HCT116 (cell line): ENCODE measurements at regions of chr14 and their contacts with region 1.

Region 1: GRCh38 chr14:21498553-21499526 is 12.3 kb downstream of the METTL3 start:
- DNase-seq: peak; percentile 28
- ATAC-seq: peak; percentile 80
- H3K4me3 ChIP-seq: no peak overlapping the region
- H3K27ac ChIP-seq: no peak overlapping the region
- H3K4me1 ChIP-seq: no peaks in the 10 kb centered on the region
- H3K27me3 ChIP-seq: no peaks in the 10 kb centered on the region
- CTCF ChIP-seq: peak; percentile 27 to 67 (median 54); a peak in 5 of 6 replicates
- POLR2A ChIP-seq: no peak
- RAD21 ChIP-seq: peak; percentile 39; the same call in 1 of the 2 replicates

Region 2: DNA sequence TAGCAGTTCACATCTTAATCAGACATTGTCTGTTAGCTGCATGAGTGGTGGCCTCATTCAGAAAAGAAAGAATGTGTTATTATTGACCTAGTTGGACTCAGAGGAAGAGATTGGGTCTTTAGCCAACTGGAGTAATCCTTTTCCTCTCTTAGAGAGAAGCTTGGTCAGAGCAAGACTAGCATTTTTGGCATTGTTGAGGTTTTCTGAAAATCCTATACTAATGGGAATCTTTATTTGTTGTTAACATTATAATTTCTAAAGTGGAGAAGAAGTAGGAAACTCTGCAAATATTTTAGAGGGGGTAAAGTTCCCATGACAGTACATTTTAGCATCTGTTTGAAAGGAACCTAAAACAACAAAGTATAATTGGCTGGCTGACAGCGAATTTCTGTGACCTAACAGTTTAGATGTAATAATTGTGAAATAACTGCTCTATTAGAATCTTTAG is 12.2 kb before region 1 on chr14:
- CTCF ChIA-PET with region 1: interaction called, 12 read pairs
- POLR2A ChIA-PET with region 1: interaction called, 3 read pairs
- RAD21 ChIA-PET with region 1: no interaction called
- intact Hi-C with region 1: no loop called
- DNase-seq: no peak
- ATAC-seq: no peak
- H3K4me3 ChIP-seq: no peak overlapping the region
- H3K27ac ChIP-seq: no peak overlapping the region
- H3K4me1 ChIP-seq: no peaks in the 10 kb centered on the region
- H3K27me3 ChIP-seq: no peaks in the 10 kb centered on the region
- CTCF ChIP-seq: no peak
- POLR2A ChIP-seq: no peak
- RAD21 ChIP-seq: no peak

Region 3: DNA sequence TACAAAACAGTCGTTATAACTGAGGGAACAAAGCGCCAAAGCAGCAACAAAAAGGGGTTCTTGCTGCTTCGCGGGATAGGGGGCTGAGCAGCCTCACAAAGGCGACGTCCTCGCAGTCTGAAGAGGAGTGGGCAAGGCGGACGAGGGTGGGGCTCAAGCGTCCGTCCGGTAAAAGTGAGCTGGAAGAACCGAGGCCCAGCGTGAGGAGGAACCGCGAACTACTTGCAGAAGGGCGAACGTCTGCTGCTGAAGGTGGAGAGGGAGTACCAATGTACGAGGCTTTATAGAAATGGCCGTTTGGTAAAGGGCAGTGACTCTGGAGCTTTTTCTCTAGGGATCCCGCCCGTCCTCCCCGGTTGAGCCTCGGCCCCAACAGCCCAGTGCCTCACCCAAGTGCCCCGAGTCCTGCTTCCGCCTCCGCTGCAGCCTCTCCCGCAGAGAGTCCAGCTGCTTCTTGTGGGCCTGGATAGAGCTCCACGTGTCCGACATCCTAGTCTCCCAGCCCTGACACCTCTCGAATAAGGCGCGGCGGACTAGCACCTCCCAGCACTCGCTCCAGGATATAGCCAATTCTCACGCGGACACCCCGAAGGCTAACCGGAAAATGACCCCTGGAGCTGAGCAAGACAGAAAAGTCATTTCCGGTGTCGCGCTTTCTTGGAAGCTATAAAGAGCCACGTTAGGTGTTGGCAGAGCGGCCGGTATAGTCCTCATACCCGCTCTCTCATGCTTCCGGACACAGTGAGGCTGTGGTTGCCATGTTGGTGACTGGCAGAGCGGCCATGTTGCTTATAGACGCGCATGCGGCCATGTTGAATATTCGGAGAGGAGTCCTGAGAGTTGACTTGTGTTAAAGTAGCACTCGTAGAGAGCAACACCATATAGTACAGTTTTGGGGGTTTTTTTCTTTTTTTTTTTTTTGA is 12.2 kb after region 1 on chr14 and contains the start of gene METTL3:
- CTCF ChIA-PET with region 1: interaction called, 30 read pairs
- POLR2A ChIA-PET with region 1: interaction called, 6 read pairs
- RAD21 ChIA-PET with region 1: no interaction called
- intact Hi-C with region 1: no loop called
- DNase-seq: peak; percentile 99
- ATAC-seq: peak; percentile 98
- H3K4me3 ChIP-seq: peak within 1 kb of the TSS; percentile 72 to 84
- H3K27ac ChIP-seq: peak within 1 kb of the TSS; percentile 87
- H3K4me1 ChIP-seq: peaks cover 8 to 15% of the 10 kb centered on the region in 2 experiments; a peak in 3 of 4 replicates
- H3K27me3 ChIP-seq: no peaks in the 10 kb centered on the region
- CTCF ChIP-seq: no peak
- POLR2A ChIP-seq: peak; percentile 65
- RAD21 ChIP-seq: no peak
- total RNA-seq, gene METTL3: 62.3 TPM

Region 4: GRCh38 chr14:21557084-21557901 is 58.5 kb after region 1 on chr14:
- CTCF ChIA-PET with region 1: interaction called, 36 read pairs
- POLR2A ChIA-PET with region 1: interaction called, 3 read pairs
- RAD21 ChIA-PET with region 1: no interaction called
- intact Hi-C with region 1: loop called (anchors 1 kb)
- DNase-seq: peak; percentile 83
- ATAC-seq: peak; percentile 87
- H3K4me3 ChIP-seq: peak overlapping the region; percentile 10 to 47
- H3K27ac ChIP-seq: no peak overlapping the region
- H3K4me1 ChIP-seq: peaks cover 5 to 9% of the 10 kb centered on the region in 2 experiments; a peak in 3 of 4 replicates
- H3K27me3 ChIP-seq: no peaks in the 10 kb centered on the region
- CTCF ChIP-seq: peak; percentile 56 to 90 (median 74); a peak in 5 of 6 replicates
- POLR2A ChIP-seq: no peak
- RAD21 ChIP-seq: peak; percentile 77

Region 5: GRCh38 chr14:21575661-21576060 is 76.8 kb after region 1 on chr14:
- CTCF ChIA-PET with region 1: no interaction called
- POLR2A ChIA-PET with region 1: no interaction called
- RAD21 ChIA-PET with region 1: no interaction called
- intact Hi-C with region 1: no loop called
- DNase-seq: no peak
- ATAC-seq: no peak
- H3K4me3 ChIP-seq: no peak overlapping the region
- H3K27ac ChIP-seq: no peak overlapping the region
- H3K4me1 ChIP-seq: no peaks in the 10 kb centered on the region
- H3K27me3 ChIP-seq: no peaks in the 10 kb centered on the region; the same call in 1 of the 2 replicates
- CTCF ChIP-seq: no peak
- POLR2A ChIP-seq: no peak
- RAD21 ChIP-seq: no peak

Region 6: GRCh38 chr14:22221508-22221907 is 722.7 kb after region 1 on chr14:
- CTCF ChIA-PET with region 1: no interaction called
- POLR2A ChIA-PET with region 1: no interaction called
- RAD21 ChIA-PET with region 1: no interaction called
- intact Hi-C with region 1: no loop called
- DNase-seq: peak; percentile 12
- ATAC-seq: no peak
- H3K4me3 ChIP-seq: no peak overlapping the region
- H3K27ac ChIP-seq: no peak overlapping the region
- H3K4me1 ChIP-seq: no peaks in the 10 kb centered on the region
- H3K27me3 ChIP-seq: peaks cover 16% of the 10 kb centered on the region
- CTCF ChIP-seq: peak; percentile 4 to 58 (median 46); a peak in 4 of 6 replicates
- POLR2A ChIP-seq: no peak
- RAD21 ChIP-seq: no peak